ENCODE measurements at regions of chr4 and their contacts with region 1.

Region 1: DNA sequence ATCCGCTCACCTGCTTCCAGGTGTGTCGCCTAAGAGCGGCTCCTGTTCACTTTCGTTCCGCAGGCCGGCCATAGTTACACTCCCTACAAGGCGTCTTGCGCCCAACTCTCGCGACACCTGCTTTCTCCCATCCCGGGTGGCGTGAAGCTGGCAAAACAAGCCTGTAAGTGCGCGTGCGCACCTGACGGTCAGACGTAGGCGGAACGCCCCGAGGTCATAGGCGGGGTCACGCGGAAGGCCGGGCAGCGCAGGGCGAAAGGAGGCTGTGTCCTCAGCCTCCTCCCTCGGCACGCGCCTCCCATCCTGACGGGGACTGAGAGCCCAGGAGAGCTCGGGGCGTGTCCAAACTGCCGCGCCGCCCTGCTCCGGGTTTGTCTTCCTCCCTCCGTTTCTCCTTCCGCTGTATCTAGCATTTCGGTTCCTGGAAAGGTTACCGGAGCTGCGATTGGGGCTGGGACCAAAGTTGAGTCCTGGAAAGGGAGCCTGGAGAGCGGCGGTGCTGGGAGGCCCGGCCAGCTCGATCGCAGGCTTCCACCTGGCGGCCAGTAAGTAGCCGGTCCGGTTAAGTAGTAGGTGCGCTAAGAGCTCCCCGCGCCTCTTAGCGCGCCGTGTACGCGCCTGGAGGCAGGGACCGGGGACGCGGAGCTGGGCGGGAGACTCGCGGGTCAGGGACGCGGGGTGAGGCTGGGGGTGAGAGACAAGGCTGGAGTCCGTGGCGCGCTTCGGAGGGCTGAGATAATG is at the starts of genes ABHD18 and MFSD8:
- DNase-seq: peak; percentile 100
- ATAC-seq: peak; percentile 99
- total RNA-seq, gene ABHD18: 11.5 TPM
- total RNA-seq, gene MFSD8: 6.1 TPM

Region 2: GRCh38 chr4:127880764-127881562 is 84.3 kb before region 1 on chr4 and contains the start of gene PLK4:
- intact Hi-C with region 1: loop called (anchors 5 kb)
- DNase-seq: peak; percentile 97
- ATAC-seq: peak; percentile 99
- total RNA-seq, gene PLK4: 1.1 TPM

Region 3: GRCh38 chr4:128060699-128061565 is 95.7 kb after region 1 on chr4 and contains the start of gene LARP1B:
- intact Hi-C with region 1: loop called (anchors 5 kb)
- DNase-seq: peak; percentile 97
- ATAC-seq: peak; percentile 97
- total RNA-seq, gene LARP1B: 15.4 TPM

Region 4: DNA sequence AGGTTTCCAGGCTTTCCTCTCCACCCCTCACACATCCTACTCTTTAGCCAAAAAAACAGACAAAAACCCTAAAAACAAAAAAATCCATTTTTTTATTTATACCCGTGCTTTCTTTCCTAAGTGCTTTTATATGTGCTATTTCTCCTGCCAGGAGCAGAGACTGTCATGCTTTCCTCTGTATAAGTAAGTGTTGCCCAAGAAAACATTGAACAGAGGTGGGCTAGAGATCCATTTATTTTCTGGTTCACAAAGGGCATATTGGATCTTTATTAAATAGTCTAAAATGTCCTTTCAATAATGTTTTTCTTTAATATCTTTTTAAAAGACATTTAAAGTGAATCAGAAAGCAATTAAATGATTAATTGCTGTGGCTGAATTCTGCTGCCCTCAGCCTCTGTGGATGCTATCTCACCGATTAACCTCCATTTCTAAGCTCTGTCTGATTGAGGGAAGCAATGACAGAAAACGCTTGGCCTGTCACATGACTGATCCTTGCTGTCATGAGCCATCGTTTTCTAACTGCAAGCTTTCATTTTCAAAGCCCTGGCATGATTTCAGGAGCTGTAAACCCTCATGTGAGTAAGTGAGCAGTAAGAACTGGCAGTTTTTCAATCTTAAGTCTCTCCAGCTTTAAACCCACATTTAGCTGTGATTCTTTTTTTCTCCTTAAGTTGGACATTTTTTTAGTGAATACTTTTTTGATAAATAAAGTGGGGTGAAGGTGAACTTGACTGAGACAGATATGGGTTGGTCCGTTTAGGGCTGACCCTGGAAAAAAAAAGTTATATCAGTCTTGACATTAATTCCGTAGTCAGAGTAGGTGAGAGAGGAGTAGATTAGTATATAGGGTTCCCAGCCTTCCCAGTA is 503.1 kb after region 1 on chr4:
- intact Hi-C with region 1: no loop called
- DNase-seq: no peak
- ATAC-seq: peak; percentile 82

Measured in Right ventricle myocardium inferior (tissue), 1 donor.